ENCODE measurements at regions of chr20 and their contacts with region 1.

Region 1: DNA sequence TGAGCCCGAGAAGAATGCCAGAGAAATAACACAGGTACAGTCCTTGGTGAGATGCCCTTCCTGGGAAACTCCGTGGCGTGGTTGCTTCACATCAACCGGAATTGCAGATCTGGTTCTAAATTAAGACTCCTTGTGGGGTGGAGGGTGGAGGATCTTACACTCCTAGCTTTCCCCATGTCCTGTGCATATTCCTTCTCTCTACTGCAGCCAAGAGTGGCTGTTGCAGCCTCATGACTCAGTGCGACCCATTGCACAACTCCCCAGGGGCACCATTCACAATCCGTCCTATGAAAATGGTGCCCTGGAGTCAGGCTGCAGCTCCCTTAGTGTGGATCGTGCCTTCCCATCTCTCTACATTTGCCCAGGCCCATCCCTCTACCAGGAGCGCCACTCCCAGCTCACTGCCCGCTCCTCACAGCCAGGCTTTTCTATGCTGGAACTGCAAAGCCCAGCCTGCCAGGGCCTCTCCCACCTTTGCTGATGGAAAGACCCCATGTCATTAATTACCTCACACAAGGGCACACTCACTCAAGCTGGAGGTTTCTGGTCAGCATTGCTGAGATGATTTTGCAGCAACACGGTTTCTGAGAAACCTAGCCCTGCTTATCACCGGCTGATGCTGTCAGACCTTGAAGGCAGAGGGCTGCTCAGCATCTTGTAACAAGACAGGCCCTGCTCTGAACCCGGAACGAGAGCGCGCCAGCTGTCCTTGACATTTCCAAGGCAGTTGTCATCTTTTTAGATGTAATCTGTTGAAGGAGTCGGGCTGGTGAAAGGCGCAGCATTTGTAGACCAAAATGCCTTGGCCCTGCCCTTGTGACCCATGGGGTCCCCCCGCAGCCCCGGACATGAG is 39.7 kb downstream of the SIRPA start:
- DNase-seq: peak; percentile 89
- ATAC-seq: peak; percentile 81

Region 2: GRCh38 chr20:1734269-1734858 is 200.6 kb before region 1 on chr20:
- intact Hi-C with region 1: no loop called
- DNase-seq: no peak
- ATAC-seq: peak; percentile 34

Region 3: GRCh38 chr20:1802385-1803060 is 132.4 kb before region 1 on chr20:
- intact Hi-C with region 1: loop called (anchors 5 kb)
- DNase-seq: peak; percentile 91
- ATAC-seq: peak; percentile 80

Region 4: GRCh38 chr20:1894951-1895673 is 39.8 kb before region 1 on chr20 and contains the start of gene SIRPA:
- intact Hi-C with region 1: loop called (anchors 5 kb)
- DNase-seq: peak; percentile 83
- ATAC-seq: peak; percentile 61
- total RNA-seq, gene SIRPA: 20.9 TPM

Region 5: DNA sequence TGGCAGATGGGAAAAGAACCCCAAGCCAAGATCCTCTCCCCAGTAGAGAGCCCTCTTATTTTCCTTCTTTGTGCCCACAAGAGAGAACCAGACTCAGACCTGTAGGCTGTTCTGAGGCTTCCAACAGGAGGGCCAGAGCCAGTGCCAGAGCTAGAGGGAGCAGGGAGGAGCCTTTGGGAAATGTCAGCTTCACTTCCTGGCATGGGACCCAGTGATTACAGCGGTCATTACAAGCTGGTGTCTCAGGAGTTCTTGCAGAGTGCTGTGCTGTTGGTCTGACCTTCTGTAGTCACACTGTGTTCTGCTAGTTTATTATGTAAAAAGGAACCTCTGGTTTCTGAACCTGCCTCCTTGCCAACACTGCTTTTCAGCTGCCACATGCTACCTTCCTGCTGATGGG is 205.6 kb after region 1 on chr20:
- intact Hi-C with region 1: loop called (anchors 10 kb)
- DNase-seq: no peak
- ATAC-seq: peak; percentile 89

Region 6: DNA sequence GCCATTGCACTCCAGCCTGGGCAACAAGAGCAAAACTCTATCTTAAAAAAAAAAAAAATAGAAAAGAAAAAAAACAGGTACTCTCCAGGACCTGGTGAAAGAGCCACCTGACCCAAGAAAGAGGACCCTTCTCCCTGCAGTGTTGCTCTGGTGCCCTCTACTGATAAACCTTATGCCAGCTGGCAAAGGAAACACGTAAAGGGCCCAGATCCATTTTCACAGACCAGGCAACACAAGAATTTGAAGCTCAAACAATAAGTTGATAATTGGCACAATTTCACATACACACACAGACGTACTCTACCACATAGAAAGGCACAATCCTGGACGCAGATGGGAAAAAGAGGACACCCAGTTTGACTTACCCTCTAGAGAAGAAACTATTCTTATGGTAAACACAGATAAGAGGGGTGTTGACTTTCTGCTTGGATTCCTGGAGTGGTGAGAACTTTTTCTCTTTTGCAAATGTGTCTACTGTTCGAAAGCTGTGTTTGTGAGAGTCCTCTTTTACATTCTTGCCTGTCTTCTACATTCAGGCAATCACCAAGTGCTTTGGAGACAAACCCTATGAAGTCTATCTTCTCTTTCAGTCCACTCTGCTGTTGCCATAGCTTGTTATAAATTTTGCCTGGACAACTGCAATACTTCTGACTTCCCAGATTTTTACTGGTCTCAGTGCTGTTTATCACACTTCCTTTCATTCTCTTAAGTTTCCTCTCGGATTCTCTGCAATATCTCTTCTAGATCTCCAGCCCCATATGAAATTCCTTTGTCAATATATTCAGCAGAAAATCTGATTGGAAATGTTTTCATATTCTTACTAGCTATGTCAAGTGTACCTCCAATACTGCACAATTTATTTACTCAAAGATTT is 542.0 kb after region 1 on chr20:
- intact Hi-C with region 1: no loop called
- DNase-seq: no peak
- ATAC-seq: no peak

Measured in Right ventricle myocardium inferior (tissue), 1 donor.